ENCODE measurements at regions of chr5 and their contacts with region 1.

Region 1: DNA sequence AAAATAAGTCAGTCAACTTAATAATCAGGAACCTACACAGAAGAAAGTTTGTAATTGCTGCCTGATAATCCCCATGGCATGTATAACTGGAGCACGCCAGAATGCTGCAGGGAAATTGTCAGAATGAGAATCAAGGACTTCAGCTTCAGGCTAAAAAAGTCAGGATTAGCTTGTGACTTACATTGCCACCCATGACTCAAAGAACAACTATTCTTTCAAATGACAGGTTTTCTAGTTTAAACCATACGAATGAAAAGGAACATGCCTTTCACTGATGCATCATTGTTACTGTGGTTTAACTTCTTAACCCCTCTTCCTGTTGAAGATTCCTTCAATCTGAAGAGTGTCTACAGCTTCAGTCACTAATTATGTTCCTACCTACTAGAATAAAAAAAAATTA is 112.4 kb downstream of the ISL1 start:
- DNase-seq: no peak
- H3K4me3 Mint-ChIP-seq: no peak overlapping the region
- H3K27ac Mint-ChIP-seq: no peak overlapping the region
- H3K4me1 Mint-ChIP-seq: no peaks in the 10 kb centered on the region
- H3K27me3 Mint-ChIP-seq: peaks cover 36% of the 10 kb centered on the region
- CTCF ChIP-seq: no peak

Region 2: GRCh38 chr5:51846015-51846414 is 350.3 kb after region 1 on chr5:
- CTCF ChIA-PET with region 1: interaction called, 3 read pairs
- POLR2A ChIA-PET with region 1: no interaction called
- intact Hi-C with region 1: loop called (anchors 2 kb)
- DNase-seq: peak; percentile 13
- H3K4me3 Mint-ChIP-seq: no peak overlapping the region
- H3K27ac Mint-ChIP-seq: no peak overlapping the region
- H3K4me1 Mint-ChIP-seq: no peaks in the 10 kb centered on the region
- H3K27me3 Mint-ChIP-seq: no peaks in the 10 kb centered on the region
- CTCF ChIP-seq: no peak

Region 3: GRCh38 chr5:51960617-51961115 is 465.0 kb after region 1 on chr5:
- CTCF ChIA-PET with region 1: interaction called, 5 read pairs
- POLR2A ChIA-PET with region 1: no interaction called
- intact Hi-C with region 1: loop called (anchors 2 kb)
- DNase-seq: peak; percentile 17
- H3K4me3 Mint-ChIP-seq: no peak overlapping the region
- H3K27ac Mint-ChIP-seq: no peak overlapping the region
- H3K4me1 Mint-ChIP-seq: no peaks in the 10 kb centered on the region
- H3K27me3 Mint-ChIP-seq: no peaks in the 10 kb centered on the region
- CTCF ChIP-seq: peak; percentile 38

Region 4: DNA sequence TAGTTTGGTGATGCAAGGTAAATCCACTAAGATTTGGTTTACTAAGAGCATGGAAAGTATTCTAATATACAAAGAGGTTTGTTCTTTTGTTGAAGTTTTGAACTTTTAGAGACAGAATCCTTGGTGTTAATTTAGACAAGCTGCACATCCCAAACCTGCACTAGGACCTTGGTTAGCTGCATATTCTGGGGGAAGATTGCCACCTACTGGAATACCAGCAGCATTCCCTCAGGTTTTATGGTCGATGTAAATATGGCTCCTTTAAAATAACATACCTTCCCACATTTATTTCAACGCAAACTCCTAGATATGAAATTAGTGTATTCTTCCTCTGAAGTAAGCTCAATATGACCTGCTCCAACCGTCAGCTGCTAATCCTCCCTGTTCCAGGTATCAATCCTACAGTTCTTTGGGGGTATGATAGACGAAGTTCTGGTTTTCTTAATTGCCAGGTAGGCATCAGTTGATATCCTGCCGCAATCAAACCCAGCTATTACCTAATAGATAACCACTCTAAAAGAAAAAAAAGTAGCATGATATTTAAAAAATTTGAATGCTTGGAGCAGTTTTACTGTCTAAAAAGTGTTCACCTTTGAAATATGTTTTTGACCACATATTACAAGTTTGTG is 511.7 kb after region 1 on chr5:
- CTCF ChIA-PET with region 1: no interaction called
- POLR2A ChIA-PET with region 1: no interaction called
- intact Hi-C with region 1: loop called (anchors 2 kb)
- DNase-seq: peak; percentile 59
- H3K4me3 Mint-ChIP-seq: no peak overlapping the region
- H3K27ac Mint-ChIP-seq: no peak overlapping the region
- H3K4me1 Mint-ChIP-seq: no peaks in the 10 kb centered on the region
- H3K27me3 Mint-ChIP-seq: peaks cover 38% of the 10 kb centered on the region
- CTCF ChIP-seq: peak; percentile 66